Left ventricle myocardium superior (tissue), 1 donor: ENCODE measurements at regions of chr12 and their contacts with region 1.

Region 1: GRCh38 chr12:4857472-4858291 is 52.0 kb upstream of the KCNA1 start:
- DNase-seq: peak; percentile 72
- ATAC-seq: peak; percentile 86

Region 2: DNA sequence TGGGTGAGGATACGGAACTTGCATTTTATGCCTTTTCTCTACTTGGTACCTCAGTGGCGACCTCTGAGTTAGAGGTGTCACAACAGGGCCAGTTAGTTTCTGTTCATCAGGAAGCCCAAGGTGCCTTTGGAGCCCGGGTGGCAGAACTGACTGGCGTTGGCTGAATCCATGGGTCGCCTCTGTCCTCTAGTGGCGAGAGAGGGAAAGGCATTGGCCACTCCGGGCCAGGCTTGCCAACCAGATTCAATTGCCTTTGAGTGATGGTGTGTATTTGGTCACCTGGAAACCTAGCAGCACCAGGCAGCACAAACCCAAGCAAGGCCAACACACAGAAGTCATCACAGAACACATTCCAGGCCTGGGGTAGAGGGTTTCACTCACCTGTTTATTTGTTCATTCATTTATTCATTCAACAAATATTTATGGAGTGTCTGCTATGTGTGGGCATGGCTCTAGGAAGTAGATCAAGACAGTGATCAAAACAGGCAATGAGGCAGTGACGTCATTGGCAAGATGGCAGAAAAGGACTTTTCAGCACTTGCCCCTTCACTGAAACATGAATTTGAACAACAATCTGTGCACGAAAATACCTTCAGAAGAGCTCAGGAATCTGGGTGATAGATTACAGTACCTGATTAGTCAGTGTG is 145.5 kb after region 1 on chr12:
- intact Hi-C with region 1: loop called (anchors 5 kb)
- DNase-seq: peak; percentile 74
- ATAC-seq: peak; percentile 95

Region 3: GRCh38 chr12:5083955-5084849 is 226.5 kb after region 1 on chr12:
- intact Hi-C with region 1: loop called (anchors 10 kb)
- DNase-seq: no peak
- ATAC-seq: peak; percentile 59